CD14-positive monocyte (primary cell): ENCODE measurements at regions of chr1 and their contacts with region 1.

Region 1: GRCh38 chr1:220999872-221000863 is 120.9 kb downstream of the HLX start:
- DNase-seq: peak; percentile 93 to 98 (median 97)
- H3K4me3 ChIP-seq: peak overlapping the region in 1 of 3 experiments; percentile 37
- H3K4me3 Mint-ChIP-seq: no peak overlapping the region
- H3K27ac ChIP-seq: peak overlapping the region; percentile 3 to 77
- H3K27ac Mint-ChIP-seq: no peak overlapping the region
- H3K4me1 ChIP-seq: peaks cover 25 to 28% of the 10 kb centered on the region in 2 donors
- H3K4me1 Mint-ChIP-seq: peaks cover 6% of the 10 kb centered on the region
- H3K27me3 ChIP-seq: no peaks in the 10 kb centered on the region
- H3K27me3 Mint-ChIP-seq: peaks cover 0 to 3% (median 3%) of the 10 kb centered on the region in 3 donors
- CTCF ChIP-seq: no peak

Region 2: GRCh38 chr1:220957233-220957605 is 42.9 kb before region 1 on chr1:
- intact Hi-C with region 1: loop called in 1 of 2 experiments (anchors 5 kb)
- DNase-seq: peak; percentile 78 to 93 (median 88)
- H3K4me3 ChIP-seq: no peak overlapping the region
- H3K4me3 Mint-ChIP-seq: peak overlapping the region in 1 of 2 donors; percentile 62
- H3K27ac ChIP-seq: no peak overlapping the region
- H3K27ac Mint-ChIP-seq: peak overlapping the region in 4 of 7 donors; percentile 6 to 76 (median 73)
- H3K4me1 ChIP-seq: peaks cover 16 to 22% of the 10 kb centered on the region in 2 donors
- H3K4me1 Mint-ChIP-seq: peaks cover 22% of the 10 kb centered on the region
- H3K27me3 ChIP-seq: no peaks in the 10 kb centered on the region
- H3K27me3 Mint-ChIP-seq: peaks cover 0 to 2% (median 0%) of the 10 kb centered on the region in 3 donors
- CTCF ChIP-seq: no peak

Region 3: DNA sequence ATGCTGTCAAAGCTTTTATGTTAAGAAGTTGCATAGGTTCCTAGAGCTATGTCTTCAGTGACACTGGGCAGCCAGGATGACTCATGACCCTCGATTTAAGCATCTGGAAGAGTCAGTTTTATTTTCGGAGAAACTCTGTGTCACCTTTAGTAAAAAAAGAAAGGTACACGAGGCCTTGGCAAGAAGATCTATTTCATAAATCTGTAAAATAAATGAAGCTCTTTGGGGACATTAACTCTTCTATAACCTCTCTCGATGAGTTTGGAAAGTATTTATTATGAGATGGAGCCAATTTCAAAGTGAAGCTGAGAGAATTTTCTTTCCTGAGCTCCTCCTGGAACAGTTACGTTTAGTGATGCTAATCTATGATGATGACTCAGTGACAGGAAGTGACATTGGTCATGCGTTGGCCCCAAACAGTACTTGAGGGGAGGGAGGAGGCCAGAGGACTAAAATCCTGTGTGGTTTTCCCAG is 35.5 kb after region 1 on chr1:
- intact Hi-C with region 1: loop called in 1 of 2 experiments (anchors 5 kb)
- DNase-seq: peak; percentile 37 to 79 (median 51)
- H3K4me3 ChIP-seq: no peak overlapping the region
- H3K4me3 Mint-ChIP-seq: no peak overlapping the region
- H3K27ac ChIP-seq: no peak overlapping the region
- H3K27ac Mint-ChIP-seq: peak overlapping the region in 3 of 7 donors; percentile 47 to 79 (median 67)
- H3K4me1 ChIP-seq: peaks cover 4 to 10% of the 10 kb centered on the region in 2 donors
- H3K4me1 Mint-ChIP-seq: peaks cover 22% of the 10 kb centered on the region
- H3K27me3 ChIP-seq: no peaks in the 10 kb centered on the region
- H3K27me3 Mint-ChIP-seq: peaks cover 0 to 2% (median 0%) of the 10 kb centered on the region in 3 donors
- CTCF ChIP-seq: no peak

Region 4: GRCh38 chr1:221166559-221167318 is 166.6 kb after region 1 on chr1:
- intact Hi-C with region 1: loop called in 1 of 2 experiments (anchors 5 kb)
- DNase-seq: peak; percentile 88 to 96 (median 91)
- H3K4me3 ChIP-seq: peak overlapping the region in 2 of 3 experiments; percentile 27 to 58
- H3K4me3 Mint-ChIP-seq: peak overlapping the region; percentile 35 to 83
- H3K27ac ChIP-seq: peak overlapping the region in 1 of 2 donors; percentile 76
- H3K27ac Mint-ChIP-seq: peak overlapping the region; percentile 76 to 97 (median 92)
- H3K4me1 ChIP-seq: peaks cover 56 to 80% of the 10 kb centered on the region in 2 donors
- H3K4me1 Mint-ChIP-seq: peaks cover 65% of the 10 kb centered on the region
- H3K27me3 ChIP-seq: peaks cover 0 to 6% of the 10 kb centered on the region in 2 donors
- H3K27me3 Mint-ChIP-seq: peaks cover 6 to 9% (median 6%) of the 10 kb centered on the region in 3 donors
- CTCF ChIP-seq: no peak